Ascending aorta (tissue), 2 donors: ENCODE measurements at regions of chr17 and their contacts with region 1.

Region 1: DNA sequence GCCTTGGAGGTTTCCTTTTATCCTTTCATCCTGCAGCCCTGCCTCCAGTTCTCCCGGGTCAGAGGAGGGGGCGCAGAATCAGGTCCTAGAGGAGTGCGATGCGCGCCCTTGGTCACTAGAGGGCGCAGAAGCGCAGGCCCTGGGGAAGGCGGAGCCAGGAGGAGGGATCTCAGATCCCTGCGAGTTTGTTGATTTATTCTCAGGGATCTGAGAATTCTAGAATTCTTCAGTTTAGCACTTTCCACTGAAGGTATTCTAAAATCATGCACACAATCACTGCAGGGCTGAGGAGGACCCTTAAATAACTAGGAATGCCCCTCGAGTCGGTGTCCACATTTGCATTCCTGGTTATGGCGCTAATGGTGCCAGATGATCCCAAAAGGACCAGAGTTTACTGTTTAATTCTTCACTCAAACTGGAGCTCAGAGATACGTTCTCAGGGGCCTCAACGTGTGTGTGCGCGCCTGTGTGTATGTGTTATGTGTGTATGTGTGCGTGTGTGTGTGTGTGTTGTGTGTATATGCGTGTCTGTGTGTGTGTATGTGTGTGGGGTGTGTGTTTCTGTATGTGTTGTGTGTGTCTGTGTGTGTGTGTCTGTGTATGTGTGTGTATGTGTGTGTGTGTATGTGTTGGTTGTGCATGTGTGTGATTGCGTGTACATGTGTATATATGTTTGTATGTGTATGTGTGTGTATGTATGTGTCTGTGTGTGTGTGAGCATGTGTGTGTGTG is 6.9 kb upstream of the ELAC2 start:
- DNase-seq: peak in 1 of 2 donors; percentile 74
- H3K4me3 ChIP-seq: peak overlapping the region; percentile 26 to 41
- H3K27ac ChIP-seq: no peak overlapping the region
- H3K4me1 ChIP-seq: peaks cover 0 to 3% of the 10 kb centered on the region in 2 donors
- H3K27me3 ChIP-seq: no peaks in the 10 kb centered on the region
- CTCF ChIP-seq: peak; percentile 61 to 100 (median 95)

Region 2: DNA sequence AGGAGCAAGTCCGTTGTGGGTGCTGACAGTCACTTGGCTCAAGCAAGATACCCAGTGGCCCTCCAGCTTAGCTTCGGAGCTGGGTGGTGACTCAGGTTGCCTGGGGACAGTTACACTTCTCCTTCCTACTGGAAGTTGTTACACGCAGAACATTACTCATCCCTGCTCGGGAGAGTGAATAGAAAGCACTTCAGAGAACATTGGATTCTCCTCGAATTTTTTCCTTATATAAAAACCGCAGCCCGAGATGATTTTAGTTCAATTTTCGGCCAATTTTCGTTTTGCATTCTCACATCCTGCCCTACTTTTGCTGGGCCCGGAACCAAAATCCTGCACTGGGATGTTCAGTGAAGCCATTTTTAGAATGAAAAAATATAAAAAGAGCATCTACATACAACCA is 106.5 kb before region 1 on chr17:
- intact Hi-C with region 1: no loop called
- DNase-seq: no peak
- H3K4me3 ChIP-seq: no peak overlapping the region
- H3K27ac ChIP-seq: no peak overlapping the region
- H3K4me1 ChIP-seq: no peaks in the 10 kb centered on the region
- H3K27me3 ChIP-seq: no peaks in the 10 kb centered on the region
- CTCF ChIP-seq: no peak

Region 3: DNA sequence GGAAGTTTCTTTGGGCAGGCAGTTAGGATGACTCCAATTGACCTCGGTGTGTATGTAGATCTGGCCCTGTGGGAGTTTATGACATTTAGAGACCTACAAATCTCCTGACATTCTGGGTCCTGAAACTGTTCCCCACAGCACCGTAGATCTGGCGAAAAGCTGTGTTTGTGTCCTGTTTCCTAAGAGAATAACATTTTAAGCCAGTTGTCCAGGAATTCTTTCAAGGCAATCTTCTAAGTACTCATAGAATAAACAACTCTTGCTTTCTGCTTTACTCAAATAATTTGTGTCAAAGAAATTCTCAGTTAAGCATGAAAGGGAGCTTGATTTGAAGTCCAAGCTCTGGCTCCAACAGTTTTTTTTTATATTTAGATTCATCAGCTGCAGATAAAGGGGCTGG is 71.6 kb after region 1 on chr17:
- intact Hi-C with region 1: loop called (anchors 10 kb)
- DNase-seq: no peak
- H3K4me3 ChIP-seq: no peak overlapping the region
- H3K27ac ChIP-seq: no peak overlapping the region
- H3K4me1 ChIP-seq: no peaks in the 10 kb centered on the region
- H3K27me3 ChIP-seq: no peaks in the 10 kb centered on the region
- CTCF ChIP-seq: no peak